ENCODE measurements at regions of chr19 and their contacts with region 1.

Region 1: DNA sequence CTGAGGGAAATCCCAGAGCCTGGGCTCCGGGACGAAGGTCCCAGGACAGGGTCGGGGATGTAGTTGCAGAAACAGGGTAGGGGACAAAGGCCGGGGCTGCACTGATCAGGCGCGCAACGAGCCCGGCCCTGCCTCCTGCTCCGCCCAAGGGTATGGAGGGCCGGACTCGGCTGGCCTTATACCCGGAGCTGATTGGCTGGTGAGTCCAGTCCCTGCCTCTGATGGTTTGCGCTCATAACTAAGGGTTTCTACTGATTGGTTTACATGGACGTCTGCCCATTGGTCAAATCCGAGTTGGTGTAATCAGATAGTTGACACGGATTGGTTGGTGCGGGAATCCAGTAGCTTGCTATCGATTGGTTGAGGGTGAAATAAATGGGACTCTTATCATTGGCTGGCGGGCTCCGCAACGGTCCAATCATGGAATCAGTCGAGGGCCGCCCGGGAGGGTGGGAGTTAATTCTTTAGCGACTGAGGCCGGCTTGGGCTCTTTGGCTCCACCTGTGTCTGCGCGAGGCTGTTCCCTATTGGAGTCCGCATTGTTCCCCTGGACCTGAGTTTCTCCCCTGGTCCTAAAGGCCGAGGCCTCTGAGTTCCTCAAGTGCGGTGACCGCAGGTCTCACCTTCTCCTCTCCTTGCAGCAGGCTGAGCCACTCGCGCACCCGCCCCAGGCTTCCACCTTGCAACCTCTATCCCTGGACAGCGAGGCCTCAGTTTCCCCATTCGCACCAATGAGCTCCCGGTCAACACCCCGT is 570 bp upstream of the MPND start:
- DNase-seq: peak; percentile 100
- ATAC-seq: peak; percentile 93
- H3K4me3 ChIP-seq: peak overlapping the region; percentile 69 to 88 (median 88)
- H3K27ac ChIP-seq: peak overlapping the region; percentile 98
- H3K4me1 ChIP-seq: peaks cover 55% of the 10 kb centered on the region
- H3K27me3 ChIP-seq: no peaks in the 10 kb centered on the region; a peak in 1 of 5 replicates
- CTCF ChIP-seq: peak; percentile 51
- EP300 ChIP-seq: no peak; a peak in 1 of 4 replicates
- POLR2A ChIP-seq: peak; percentile 63 to 91
- RAD21 ChIP-seq: peak; percentile 25

Region 2: DNA sequence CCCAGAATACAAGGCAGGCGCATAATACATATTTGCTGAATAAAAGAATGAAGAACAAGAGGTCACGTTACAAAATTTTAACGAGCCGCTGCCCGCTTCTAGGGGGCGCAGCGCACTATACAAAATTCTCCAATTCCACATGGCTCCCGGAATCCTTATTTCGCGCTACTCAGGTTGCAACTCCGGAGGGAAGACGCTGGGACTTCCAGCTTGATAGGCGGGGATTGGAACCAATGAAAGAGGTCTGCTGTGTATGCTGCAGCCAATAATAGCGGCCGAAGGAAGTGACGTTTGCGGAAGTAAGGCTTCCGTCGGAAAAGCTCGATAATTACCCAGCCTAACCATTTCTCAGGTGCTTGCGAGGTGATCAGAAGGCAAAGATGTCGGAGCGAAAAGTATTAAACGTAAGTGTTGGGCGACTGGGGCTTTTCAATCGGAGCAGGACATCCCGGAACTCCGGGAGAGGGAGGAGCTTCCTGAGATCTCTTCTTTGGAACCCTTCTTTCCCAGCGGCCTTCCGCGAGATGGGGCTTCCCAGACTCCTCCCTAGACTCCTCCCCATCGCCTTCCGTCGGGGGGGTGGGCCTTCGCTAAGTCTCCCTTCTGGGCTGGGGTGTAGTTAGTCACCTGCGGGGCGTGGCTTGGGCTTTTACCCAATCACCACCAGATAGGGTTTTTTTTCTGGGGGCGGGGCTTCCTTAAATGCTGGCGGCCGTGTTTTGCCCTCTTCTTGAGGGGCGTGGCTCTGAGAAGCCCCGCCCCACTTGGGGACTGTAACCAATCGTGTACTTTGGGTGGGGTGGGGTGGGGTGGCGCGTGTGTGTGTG is 95.8 kb before region 1 on chr19 and contains the start of gene YJU2:
- CTCF ChIA-PET with region 1: no interaction called
- POLR2A ChIA-PET with region 1: interaction called, 25 read pairs
- in situ Hi-C with region 1: no loop called
- intact Hi-C with region 1: no loop called
- DNase-seq: peak; percentile 99
- ATAC-seq: peak; percentile 95
- H3K4me3 ChIP-seq: peak within 1 kb of the TSS; percentile 72 to 89 (median 84)
- H3K27ac ChIP-seq: peak within 1 kb of the TSS; percentile 96
- H3K4me1 ChIP-seq: peaks cover 15% of the 10 kb centered on the region
- H3K27me3 ChIP-seq: no peaks in the 10 kb centered on the region; a peak in 2 of 5 replicates
- CTCF ChIP-seq: peak; percentile 66
- EP300 ChIP-seq: peak in 1 of 2 experiments; percentile 36; a peak in 1 of 4 replicates
- POLR2A ChIP-seq: peak; percentile 35 to 93; a peak in 3 of 4 replicates
- RAD21 ChIP-seq: 0 out of 2 replicates have a peak, but pooled peaks have one; percentile 38
- total RNA-seq, gene YJU2: 17.9 and 18.4 TPM in 2 replicates

Region 3: GRCh38 chr19:4284176-4284958 is 58.4 kb before region 1 on chr19:
- CTCF ChIA-PET with region 1: no interaction called
- POLR2A ChIA-PET with region 1: interaction called, 17 read pairs
- in situ Hi-C with region 1: no loop called
- intact Hi-C with region 1: no loop called
- DNase-seq: peak; percentile 81
- ATAC-seq: peak; percentile 98
- H3K4me3 ChIP-seq: peak overlapping the region; percentile 38 to 72 (median 47)
- H3K27ac ChIP-seq: no peak overlapping the region
- H3K4me1 ChIP-seq: peaks cover 17% of the 10 kb centered on the region
- H3K27me3 ChIP-seq: peaks cover 0 to 29% of the 10 kb centered on the region in 2 experiments; a peak in 3 of 5 replicates
- CTCF ChIP-seq: no peak
- EP300 ChIP-seq: no peak
- POLR2A ChIP-seq: no peak
- RAD21 ChIP-seq: no peak

Region 4: GRCh38 chr19:4322942-4323665 is 19.7 kb before region 1 on chr19:
- CTCF ChIA-PET with region 1: no interaction called
- POLR2A ChIA-PET with region 1: interaction called, 22 read pairs
- in situ Hi-C with region 1: no loop called
- intact Hi-C with region 1: no loop called
- DNase-seq: no peak
- ATAC-seq: peak; percentile 28; the same call in 2 of the 3 replicates
- H3K4me3 ChIP-seq: no peak overlapping the region
- H3K27ac ChIP-seq: no peak overlapping the region
- H3K4me1 ChIP-seq: no peaks in the 10 kb centered on the region
- H3K27me3 ChIP-seq: no peaks in the 10 kb centered on the region
- CTCF ChIP-seq: no peak
- EP300 ChIP-seq: no peak
- POLR2A ChIP-seq: no peak
- RAD21 ChIP-seq: no peak

Region 5: GRCh38 chr19:4362861-4363510 is 20.2 kb after region 1 on chr19:
- CTCF ChIA-PET with region 1: no interaction called
- POLR2A ChIA-PET with region 1: interaction called, 11 read pairs
- in situ Hi-C with region 1: no loop called
- intact Hi-C with region 1: no loop called
- DNase-seq: no peak
- ATAC-seq: peak; percentile 9
- H3K4me3 ChIP-seq: no peak overlapping the region
- H3K27ac ChIP-seq: no peak overlapping the region
- H3K4me1 ChIP-seq: no peaks in the 10 kb centered on the region
- H3K27me3 ChIP-seq: no peaks in the 10 kb centered on the region
- CTCF ChIP-seq: peak; percentile 56
- EP300 ChIP-seq: no peak
- POLR2A ChIP-seq: no peak; a peak in 1 of 4 replicates
- RAD21 ChIP-seq: no peak

Region 6: GRCh38 chr19:4390567-4391305 is 47.9 kb after region 1 on chr19:
- CTCF ChIA-PET with region 1: no interaction called
- POLR2A ChIA-PET with region 1: interaction called, 29 read pairs
- in situ Hi-C with region 1: no loop called
- intact Hi-C with region 1: no loop called
- DNase-seq: peak; percentile 91
- ATAC-seq: peak; percentile 83
- H3K4me3 ChIP-seq: peak overlapping the region; percentile 34 to 60 (median 40); a peak in 5 of 6 replicates
- H3K27ac ChIP-seq: peak overlapping the region; percentile 95
- H3K4me1 ChIP-seq: peaks cover 86% of the 10 kb centered on the region
- H3K27me3 ChIP-seq: no peaks in the 10 kb centered on the region
- CTCF ChIP-seq: no peak
- EP300 ChIP-seq: peak; percentile 66 to 70; a peak in 2 of 4 replicates
- POLR2A ChIP-seq: peak; percentile 39 to 70; a peak in 3 of 4 replicates
- RAD21 ChIP-seq: peak; percentile 50

Region 7: DNA sequence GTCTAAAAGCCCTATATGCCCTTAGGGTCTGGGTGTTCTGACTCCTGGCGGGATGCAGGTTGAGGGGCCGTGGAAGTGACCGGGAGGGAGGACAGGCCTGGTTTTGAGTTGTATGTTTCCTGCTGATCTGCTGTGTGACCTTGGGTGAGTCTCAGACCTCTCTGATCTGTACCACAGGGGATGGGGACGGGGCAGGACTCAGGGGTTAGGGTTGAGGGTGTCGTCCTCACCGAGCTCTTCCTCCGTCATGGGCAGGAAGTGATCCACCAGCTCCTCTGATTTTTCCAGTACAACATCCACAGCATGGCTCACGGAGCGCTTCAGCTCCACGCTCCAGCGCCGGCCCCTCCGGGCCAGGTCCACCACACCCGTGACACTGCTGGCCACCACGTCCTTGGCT is 186.1 kb after region 1 on chr19:
- CTCF ChIA-PET with region 1: no interaction called
- POLR2A ChIA-PET with region 1: no interaction called
- in situ Hi-C with region 1: no loop called
- intact Hi-C with region 1: no loop called
- DNase-seq: no peak
- ATAC-seq: no peak
- H3K4me3 ChIP-seq: no peak overlapping the region
- H3K27ac ChIP-seq: no peak overlapping the region
- H3K4me1 ChIP-seq: peaks cover 31% of the 10 kb centered on the region
- H3K27me3 ChIP-seq: no peaks in the 10 kb centered on the region; a peak in 1 of 5 replicates
- CTCF ChIP-seq: no peak
- EP300 ChIP-seq: no peak
- POLR2A ChIP-seq: no peak
- RAD21 ChIP-seq: no peak

Measured in HepG2 (cell line).